ENCODE measurements at regions of chr3 and their contacts with region 1.

Region 1: DNA sequence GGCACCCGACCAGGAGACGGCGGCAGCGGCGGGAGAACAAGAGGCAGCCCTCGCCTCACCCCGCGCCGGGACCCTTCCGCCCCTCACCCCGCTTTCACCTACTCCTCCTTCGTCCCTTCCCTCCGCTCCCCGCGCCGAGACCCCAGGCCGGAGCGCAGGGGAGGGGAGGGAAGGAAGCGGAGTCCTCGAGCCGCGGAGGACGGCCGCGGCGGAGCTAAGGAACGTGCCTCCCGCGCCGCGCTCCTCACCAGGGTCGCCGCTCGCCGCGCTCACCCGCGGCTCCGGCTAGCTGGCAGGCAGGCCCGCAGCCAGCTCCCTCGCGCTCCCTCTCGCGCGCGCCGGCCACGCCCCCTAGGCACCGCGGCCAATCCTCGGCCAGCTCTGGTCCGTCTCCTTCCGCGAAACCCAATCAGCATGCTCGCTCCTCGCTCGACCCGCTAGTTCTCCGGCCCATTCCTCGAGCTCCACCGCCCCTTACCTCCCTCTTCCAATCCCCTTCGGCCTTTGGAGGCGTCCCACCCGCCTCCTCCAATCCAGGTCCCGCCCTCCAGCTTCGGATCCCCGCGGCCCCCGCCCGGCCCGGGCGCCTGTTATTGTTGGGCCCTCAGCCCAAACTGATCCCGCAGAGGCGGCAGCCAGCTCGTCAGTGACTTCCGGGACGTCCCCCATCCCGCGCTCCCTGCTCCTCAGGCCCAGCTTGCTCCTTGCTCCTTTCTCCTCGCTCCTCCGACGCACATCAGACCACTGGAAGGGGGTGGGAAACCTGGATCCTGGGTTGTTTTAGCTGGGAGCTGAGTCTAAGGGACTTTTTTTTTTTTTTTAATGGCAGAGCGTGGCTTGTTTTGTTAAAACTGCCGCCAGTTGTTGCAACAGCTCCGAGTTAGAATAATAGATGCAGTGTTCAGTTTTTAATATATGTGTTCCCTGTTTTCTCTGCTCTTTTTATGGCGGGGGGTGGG is at the start of gene DCBLD2:
- DNase-seq: peak; percentile 98 to 99
- H3K4me3 ChIP-seq: peak within 1 kb of the TSS; percentile 91
- H3K4me3 Mint-ChIP-seq: peak within 1 kb of the TSS; percentile 96
- H3K27ac Mint-ChIP-seq: peak within 1 kb of the TSS; percentile 81
- H3K4me1 ChIP-seq: peaks cover 17% of the 10 kb centered on the region
- H3K4me1 Mint-ChIP-seq: peaks cover 14% of the 10 kb centered on the region
- H3K27me3 ChIP-seq: no peaks in the 10 kb centered on the region
- H3K27me3 Mint-ChIP-seq: no peaks in the 10 kb centered on the region
- CTCF ChIP-seq: no peak
- total RNA-seq, gene DCBLD2: 53.0 and 58.5 TPM in 2 replicates

Region 2: GRCh38 chr3:98593046-98593936 is 308.4 kb before region 1 on chr3 and contains the start of gene CPOX:
- CTCF ChIA-PET with region 1: no interaction called
- POLR2A ChIA-PET with region 1: no interaction called
- intact Hi-C with region 1: loop called (anchors 5 kb)
- DNase-seq: peak; percentile 90 to 94
- H3K4me3 ChIP-seq: peak within 1 kb of the TSS; percentile 91
- H3K4me3 Mint-ChIP-seq: peak within 1 kb of the TSS; percentile 97
- H3K27ac Mint-ChIP-seq: peak within 1 kb of the TSS; percentile 55
- H3K4me1 ChIP-seq: peaks cover 13% of the 10 kb centered on the region
- H3K4me1 Mint-ChIP-seq: peaks cover 11% of the 10 kb centered on the region
- H3K27me3 ChIP-seq: no peaks in the 10 kb centered on the region
- H3K27me3 Mint-ChIP-seq: no peaks in the 10 kb centered on the region
- CTCF ChIP-seq: no peak
- total RNA-seq, gene CPOX: 24.2 and 25.0 TPM in 2 replicates

Region 3: GRCh38 chr3:98824256-98824655 is 77.4 kb before region 1 on chr3:
- CTCF ChIA-PET with region 1: interaction called, 4 read pairs
- POLR2A ChIA-PET with region 1: no interaction called
- intact Hi-C with region 1: loop called (anchors 1 kb)
- DNase-seq: no peak
- H3K4me3 ChIP-seq: no peak overlapping the region
- H3K4me3 Mint-ChIP-seq: no peak overlapping the region
- H3K27ac Mint-ChIP-seq: no peak overlapping the region
- H3K4me1 ChIP-seq: peaks cover 17% of the 10 kb centered on the region
- H3K4me1 Mint-ChIP-seq: peaks cover 11% of the 10 kb centered on the region
- H3K27me3 ChIP-seq: no peaks in the 10 kb centered on the region
- H3K27me3 Mint-ChIP-seq: no peaks in the 10 kb centered on the region
- CTCF ChIP-seq: peak in 1 of 2 experiments; percentile 19

Measured in Caco-2 (cell line).